ENCODE measurements at regions of chr15 and their contacts with region 1.

Region 1: DNA sequence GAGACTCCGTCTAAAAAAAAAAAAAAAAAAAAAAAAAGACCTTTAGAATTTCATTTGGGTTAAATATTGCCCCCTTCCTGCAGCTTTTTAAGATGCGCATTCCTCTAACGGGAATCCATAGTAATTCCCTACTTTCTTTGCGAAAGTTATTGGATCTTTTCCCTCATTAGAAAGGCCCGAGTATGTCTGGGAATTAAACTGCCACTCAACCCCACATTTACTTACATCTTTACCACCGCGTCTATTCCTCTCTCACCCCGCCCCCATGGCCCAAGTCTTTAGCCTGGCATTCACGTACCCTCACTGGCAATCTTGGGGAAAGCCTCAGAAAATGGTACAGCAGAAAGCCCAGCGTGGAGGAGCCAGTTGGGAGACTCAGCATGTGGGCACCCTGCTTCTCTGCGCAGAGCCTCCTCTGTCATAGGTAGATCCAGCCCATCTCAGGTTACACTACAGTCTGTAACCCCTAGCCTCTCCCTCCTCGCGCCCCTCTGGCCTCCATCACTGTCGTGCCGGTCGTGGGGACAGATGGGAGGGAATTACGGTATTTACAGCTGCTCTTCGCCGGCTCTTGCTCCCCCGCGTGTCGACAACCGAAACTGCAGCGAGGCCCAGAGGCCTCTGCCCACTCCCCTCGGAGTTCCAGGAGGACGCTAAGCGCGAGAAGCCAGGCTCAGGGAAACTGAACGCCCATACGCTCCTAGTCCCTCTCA is 6.4 kb upstream of the ANKDD1A start:
- DNase-seq: peak; percentile 84 to 87
- ATAC-seq: peak; percentile 88 to 95 (median 93)
- H3K4me3 ChIP-seq: peak overlapping the region in 9 of 10 donors; percentile 12 to 52 (median 43)
- H3K27ac ChIP-seq: peak overlapping the region in 3 of 10 donors; percentile 19 to 54 (median 49)
- H3K4me1 ChIP-seq: peaks cover 0 to 45% (median 7%) of the 10 kb centered on the region in 9 donors
- H3K27me3 ChIP-seq: peaks cover 0 to 4% (median 0%) of the 10 kb centered on the region in 7 donors
- CTCF ChIP-seq: peak; percentile 80 to 96 (median 92)

Region 2: DNA sequence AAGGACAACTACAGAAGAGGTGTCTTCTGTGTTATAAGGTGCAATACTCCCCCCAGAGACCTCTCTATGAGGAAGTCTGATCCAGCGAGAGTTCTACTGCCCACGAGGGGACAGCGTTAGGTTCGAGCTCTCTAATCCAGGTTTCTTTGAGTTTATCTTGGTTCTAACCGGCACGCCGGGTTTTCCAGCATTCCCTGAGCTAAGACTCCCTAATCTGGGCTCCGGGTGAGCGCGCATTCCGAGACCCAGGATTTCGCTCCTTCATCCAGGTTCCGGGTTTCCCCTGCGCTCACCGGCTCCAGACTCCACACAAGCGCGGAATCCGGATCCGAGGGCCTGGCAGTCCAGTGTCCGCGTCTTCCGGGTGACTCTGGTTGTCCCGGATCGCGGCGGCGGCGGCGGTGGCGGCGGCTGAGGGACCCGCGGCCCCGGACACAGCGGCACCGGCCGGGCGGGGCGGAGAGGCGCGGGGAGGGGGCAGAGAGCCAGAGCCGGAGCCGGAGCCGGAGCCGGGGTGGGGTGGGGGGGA is 445.0 kb before region 1 on chr15 and contains the start of gene ZNF609:
- intact Hi-C with region 1: no loop called
- DNase-seq: peak; percentile 95 to 96
- ATAC-seq: peak; percentile 82 to 91 (median 86)
- H3K4me3 ChIP-seq: peak within 1 kb of the TSS; percentile 12 to 81 (median 62)
- H3K27ac ChIP-seq: peak within 1 kb of the TSS; percentile 78 to 90 (median 86)
- H3K4me1 ChIP-seq: peaks cover 14 to 73% (median 40%) of the 10 kb centered on the region in 9 donors
- H3K27me3 ChIP-seq: no peaks in the 10 kb centered on the region
- CTCF ChIP-seq: no peak
- total RNA-seq, gene ZNF609: 13.7 to 19.2 (median 16.6) TPM

Region 3: DNA sequence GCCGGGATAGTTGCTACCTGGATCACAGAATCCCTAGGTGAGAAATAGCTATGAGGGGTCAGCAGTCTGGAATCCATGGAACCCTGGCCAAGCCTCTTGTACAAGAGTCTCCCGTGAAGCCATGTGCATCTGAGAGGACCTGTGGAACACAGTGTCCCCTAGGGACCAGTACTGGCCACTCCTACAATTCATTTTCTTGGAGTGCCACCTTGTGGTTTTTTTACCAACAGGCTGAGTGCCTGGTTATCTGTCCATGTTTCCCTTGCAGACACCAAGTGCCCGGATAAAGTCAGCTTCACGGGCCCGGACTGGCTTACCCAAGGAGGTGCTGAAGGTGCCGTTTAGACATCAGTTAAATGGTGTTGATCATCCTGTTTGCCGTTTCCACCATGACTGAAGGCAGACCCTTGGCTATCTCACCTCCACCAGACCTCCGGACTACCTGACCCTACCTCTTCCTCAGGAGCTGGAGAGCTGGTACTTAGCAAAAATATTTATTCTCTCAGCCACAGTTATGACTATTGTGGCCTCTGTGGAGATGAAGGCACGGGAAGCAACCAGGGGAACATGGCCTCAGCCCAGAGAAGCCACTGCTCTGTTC is 223.8 kb before region 1 on chr15:
- intact Hi-C with region 1: loop called in 2 of 10 experiments (anchors 5 kb)
- DNase-seq: peak in 1 of 2 donors; percentile 54
- ATAC-seq: peak; percentile 54 to 87 (median 75)
- H3K4me3 ChIP-seq: no peak overlapping the region
- H3K27ac ChIP-seq: peak overlapping the region in 1 of 10 donors; percentile 24
- H3K4me1 ChIP-seq: peaks cover 3 to 45% (median 13%) of the 10 kb centered on the region in 9 donors
- H3K27me3 ChIP-seq: no peaks in the 10 kb centered on the region
- CTCF ChIP-seq: peak; percentile 27 to 84 (median 65)

Region 4: DNA sequence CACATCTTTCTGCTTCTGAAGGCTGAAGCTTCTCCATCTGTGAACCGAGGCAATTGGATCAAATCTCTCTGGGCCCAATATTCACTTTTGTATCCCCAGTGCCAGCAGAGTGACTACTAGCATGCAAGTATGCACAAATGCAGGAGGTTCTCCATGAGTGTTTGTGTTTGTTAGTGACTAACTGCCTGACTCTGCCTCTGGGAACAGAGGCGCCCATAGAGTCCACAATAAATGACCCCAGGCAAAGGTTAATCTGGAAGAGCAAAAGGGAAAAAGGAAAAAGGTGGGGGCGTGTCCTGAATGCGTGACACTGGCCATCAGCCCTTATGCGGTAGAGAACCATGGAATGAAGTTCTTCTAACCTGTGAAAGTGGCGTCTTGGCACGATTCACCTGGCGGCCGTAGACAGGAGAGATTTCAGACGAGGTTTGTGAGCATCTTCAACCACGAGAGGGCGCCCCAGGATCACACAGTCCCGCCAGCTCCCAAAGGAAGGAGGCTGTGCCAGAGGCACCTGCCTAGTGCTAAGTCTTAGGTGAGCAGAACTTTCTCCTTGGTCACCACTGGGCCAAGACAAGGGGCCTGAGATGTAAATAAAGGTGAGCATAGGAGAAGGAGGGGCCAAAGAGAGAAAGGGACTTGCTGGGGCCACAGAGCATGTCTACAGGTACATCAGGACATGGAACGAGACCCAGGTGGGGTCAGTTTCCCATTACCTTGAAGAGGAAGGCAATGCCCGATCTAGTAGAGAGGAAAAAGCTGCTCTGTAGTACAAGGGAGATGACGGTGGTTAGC is 174.1 kb before region 1 on chr15:
- intact Hi-C with region 1: loop called (anchors 1 to 10 kb)
- DNase-seq: peak; percentile 84 to 85
- ATAC-seq: peak; percentile 56 to 88 (median 72)
- H3K4me3 ChIP-seq: no peak overlapping the region
- H3K27ac ChIP-seq: no peak overlapping the region
- H3K4me1 ChIP-seq: peaks cover 0 to 15% (median 4%) of the 10 kb centered on the region in 9 donors
- H3K27me3 ChIP-seq: no peaks in the 10 kb centered on the region
- CTCF ChIP-seq: peak; percentile 80 to 98 (median 91)

Region 5: GRCh38 chr15:64740311-64741170 is 164.7 kb before region 1 on chr15:
- intact Hi-C with region 1: loop called in 2 of 10 experiments (anchors 5 to 10 kb)
- DNase-seq: peak; percentile 67 to 73
- ATAC-seq: peak; percentile 58 to 95 (median 84)
- H3K4me3 ChIP-seq: peak overlapping the region in 3 of 10 donors; percentile 7 to 25 (median 14)
- H3K27ac ChIP-seq: peak overlapping the region in 9 of 10 donors; percentile 56 to 77 (median 61)
- H3K4me1 ChIP-seq: peaks cover 12 to 57% (median 38%) of the 10 kb centered on the region in 9 donors
- H3K27me3 ChIP-seq: no peaks in the 10 kb centered on the region
- CTCF ChIP-seq: peak in 7 of 9 donors; percentile 20 to 61 (median 46)

Region 6: DNA sequence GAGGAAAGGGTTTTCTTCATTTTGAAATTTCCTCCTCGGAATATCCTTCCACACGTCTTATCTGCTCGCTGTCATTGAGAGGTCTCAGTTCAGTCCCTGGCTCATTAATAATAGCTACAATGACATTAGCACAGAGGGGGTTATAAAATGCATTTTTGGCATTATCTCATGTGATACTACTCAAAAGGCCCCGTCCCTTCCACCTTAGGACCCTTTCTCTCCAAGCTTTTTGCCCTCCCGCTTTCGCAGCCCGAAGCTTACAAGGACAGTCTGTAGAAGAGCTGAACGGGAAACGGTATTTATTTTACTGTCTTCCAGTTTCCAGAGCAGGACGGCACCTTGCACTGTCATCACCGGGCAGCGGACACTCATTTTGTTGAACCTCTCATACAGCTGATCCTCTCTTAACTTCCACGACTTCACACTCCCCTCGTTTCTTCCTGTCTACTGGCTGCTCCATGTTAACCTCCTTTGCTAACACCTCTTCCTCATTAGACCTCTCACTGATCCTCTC is 69.2 kb before region 1 on chr15:
- intact Hi-C with region 1: loop called in 4 of 10 experiments (anchors 5 to 10 kb)
- DNase-seq: no peak
- ATAC-seq: peak in 7 of 8 donors; percentile 0 to 22 (median 3)
- H3K4me3 ChIP-seq: peak overlapping the region in 7 of 10 donors; percentile 8 to 41 (median 35)
- H3K27ac ChIP-seq: peak overlapping the region in 9 of 10 donors; percentile 45 to 81 (median 72)
- H3K4me1 ChIP-seq: peaks cover 3 to 41% (median 20%) of the 10 kb centered on the region in 9 donors
- H3K27me3 ChIP-seq: no peaks in the 10 kb centered on the region
- CTCF ChIP-seq: peak in 2 of 9 donors; percentile 2 to 5

Region 7: GRCh38 chr15:64841258-64842095 is 63.8 kb before region 1 on chr15 and contains the start of gene PLEKHO2:
- intact Hi-C with region 1: loop called in 4 of 10 experiments (anchors 5 to 10 kb)
- DNase-seq: peak; percentile 97 to 98
- ATAC-seq: peak; percentile 88 to 94 (median 89)
- H3K4me3 ChIP-seq: peak within 1 kb of the TSS; percentile 74 to 100 (median 94)
- H3K27ac ChIP-seq: peak within 1 kb of the TSS; percentile 91 to 99 (median 98)
- H3K4me1 ChIP-seq: peaks cover 17 to 62% (median 42%) of the 10 kb centered on the region in 9 donors
- H3K27me3 ChIP-seq: no peaks in the 10 kb centered on the region
- CTCF ChIP-seq: peak in 4 of 9 donors; percentile 28 to 43 (median 36)
- total RNA-seq, gene PLEKHO2: 5.9 to 24.2 (median 9.7) TPM